ENCODE measurements at regions of chr18 and their contacts with region 1.

Region 1: DNA sequence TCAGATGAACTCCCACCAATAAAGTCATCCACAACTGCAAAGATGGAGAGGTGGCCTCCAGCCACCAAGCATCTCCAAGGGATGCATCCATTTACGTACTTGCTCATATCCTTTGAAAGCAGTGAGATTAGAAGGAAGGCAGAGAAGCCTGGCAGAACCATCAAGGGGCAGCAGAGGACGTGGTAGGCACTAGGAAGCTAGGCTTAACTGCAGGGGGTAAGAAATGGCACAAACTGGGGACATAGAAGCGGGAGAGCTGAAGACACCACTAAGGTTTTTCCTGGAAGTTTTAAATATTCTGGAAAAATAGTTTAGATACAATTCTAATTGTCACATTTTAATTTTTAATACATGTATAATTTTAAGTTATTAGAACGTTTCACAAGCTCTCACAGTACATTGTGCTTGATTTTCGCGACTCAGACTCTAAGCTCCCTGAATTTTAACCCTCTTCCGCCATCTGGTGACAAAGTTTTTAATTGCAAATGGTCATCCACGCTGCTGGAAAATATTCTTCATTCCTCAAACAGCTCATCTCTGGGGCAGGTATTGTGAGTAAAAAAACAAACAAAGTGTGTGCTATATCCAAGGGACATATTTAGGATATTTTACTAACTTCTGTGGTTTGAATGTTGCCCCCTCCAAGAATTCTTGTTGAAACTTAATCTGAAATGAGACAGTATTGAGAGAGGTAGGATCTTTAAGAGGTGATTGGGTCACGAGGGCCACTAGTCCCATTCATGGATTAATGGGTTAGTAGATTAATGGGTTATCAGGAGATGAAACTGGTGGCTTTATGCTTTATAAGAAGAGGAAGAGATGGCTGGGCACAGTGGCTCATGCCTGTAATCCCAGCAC is 1.6 kb upstream of the PSTPIP2 start:
- DNase-seq: peak; percentile 30 to 70 (median 38)
- ATAC-seq: peak; percentile 58
- H3K4me3 ChIP-seq: no peak overlapping the region
- H3K27ac ChIP-seq: no peak overlapping the region
- H3K4me1 ChIP-seq: peaks cover 3 to 31% of the 10 kb centered on the region in 2 experiments; a peak in 4 of 5 replicates
- H3K27me3 ChIP-seq: no peaks in the 10 kb centered on the region
- CTCF ChIP-seq: peak; percentile 53 to 68 (median 58); a peak in 4 of 6 replicates
- EP300 ChIP-seq: no peak
- POLR2A ChIP-seq: no peak
- RAD21 ChIP-seq: peak; percentile 79 to 85

Region 2: DNA sequence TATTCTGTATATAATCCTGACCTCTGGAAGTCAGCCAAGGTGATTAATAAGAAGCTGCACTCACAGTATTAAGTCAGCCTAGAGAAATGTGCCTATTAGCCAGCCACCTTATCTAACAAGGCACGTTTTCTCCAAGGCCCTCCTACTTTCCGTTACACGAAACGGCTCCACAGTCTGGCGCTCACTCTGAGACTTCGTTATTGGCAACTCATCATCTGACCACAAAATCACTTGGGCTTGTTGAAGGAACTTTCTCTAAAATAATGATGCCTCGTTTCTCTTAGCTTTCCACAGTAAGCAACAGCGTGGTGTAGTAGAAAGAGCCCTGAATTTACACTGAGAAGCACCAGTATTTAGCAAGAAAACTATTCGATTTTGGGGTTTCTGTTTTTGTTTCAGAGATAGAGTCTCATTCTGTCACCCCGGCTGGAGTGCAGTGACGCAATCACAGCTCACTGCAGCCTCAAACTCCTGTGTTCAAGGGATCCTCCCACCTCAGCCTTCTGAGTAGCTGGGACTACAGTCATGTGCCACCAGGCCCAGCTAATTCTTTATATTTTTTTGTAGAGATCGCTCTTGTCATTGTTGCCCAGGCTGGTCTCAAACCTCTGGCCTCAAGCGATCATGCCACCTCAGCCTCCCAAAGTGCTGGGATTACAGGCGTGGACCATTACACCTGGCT is 403.3 kb before region 1 on chr18:
- CTCF ChIA-PET with region 1: interaction called, 4 read pairs
- POLR2A ChIA-PET with region 1: no interaction called
- in situ Hi-C with region 1: loop called (anchors 10 kb)
- intact Hi-C with region 1: loop called (anchors 2 kb)
- DNase-seq: peak; percentile 71 to 81 (median 72)
- ATAC-seq: peak; percentile 93
- H3K4me3 ChIP-seq: no peak overlapping the region
- H3K27ac ChIP-seq: peak overlapping the region; percentile 85
- H3K4me1 ChIP-seq: peaks cover 12 to 19% of the 10 kb centered on the region in 2 experiments
- H3K27me3 ChIP-seq: no peaks in the 10 kb centered on the region
- CTCF ChIP-seq: no peak
- EP300 ChIP-seq: peak; percentile 88
- POLR2A ChIP-seq: no peak
- RAD21 ChIP-seq: no peak

Region 3: DNA sequence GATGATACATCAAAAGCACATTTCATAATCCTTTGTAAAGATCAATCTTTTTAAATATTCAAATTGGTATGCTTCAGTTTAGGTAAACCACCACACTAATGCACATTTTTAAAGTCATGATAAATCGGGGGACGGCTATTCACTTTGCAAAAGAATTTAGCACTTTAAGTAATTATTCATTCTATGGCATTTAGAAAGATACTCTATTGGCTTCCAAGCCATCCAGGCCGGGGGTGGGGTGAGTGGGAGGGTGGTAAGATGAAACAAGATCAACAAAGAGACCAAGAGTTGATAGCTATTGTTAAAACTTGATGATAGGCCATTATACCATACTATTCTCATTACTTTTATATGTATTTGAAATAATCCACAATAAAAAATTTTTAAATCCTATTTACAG is 147.6 kb before region 1 on chr18:
- CTCF ChIA-PET with region 1: interaction called, 13 read pairs
- POLR2A ChIA-PET with region 1: no interaction called
- in situ Hi-C with region 1: no loop called
- intact Hi-C with region 1: no loop called
- DNase-seq: no peak
- ATAC-seq: no peak
- H3K4me3 ChIP-seq: no peak overlapping the region
- H3K27ac ChIP-seq: no peak overlapping the region
- H3K4me1 ChIP-seq: no peaks in the 10 kb centered on the region
- H3K27me3 ChIP-seq: no peaks in the 10 kb centered on the region
- CTCF ChIP-seq: no peak
- EP300 ChIP-seq: no peak
- POLR2A ChIP-seq: no peak
- RAD21 ChIP-seq: no peak

Region 4: DNA sequence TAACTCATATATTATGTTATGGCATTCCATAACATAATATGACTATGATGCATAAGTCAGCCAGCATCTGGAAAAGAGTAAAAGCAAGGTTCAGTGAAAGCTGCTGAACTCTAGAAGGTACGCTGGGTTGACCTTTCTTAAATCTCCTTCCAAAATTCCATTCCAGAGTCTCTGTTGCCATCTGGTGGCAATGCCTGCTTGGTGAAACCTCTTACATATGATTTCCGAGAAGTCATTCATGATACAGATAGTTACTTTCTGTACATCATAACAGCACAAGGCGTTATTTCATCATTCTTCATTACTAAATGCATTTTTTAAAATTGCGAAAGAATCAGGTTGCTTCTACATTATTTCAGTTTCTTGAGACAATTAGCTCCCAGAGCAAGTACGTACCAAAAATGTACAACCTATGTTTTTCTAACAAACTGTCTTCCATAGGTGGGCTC is 99.6 kb before region 1 on chr18:
- CTCF ChIA-PET with region 1: interaction called, 7 read pairs
- POLR2A ChIA-PET with region 1: no interaction called
- in situ Hi-C with region 1: no loop called
- intact Hi-C with region 1: loop called (anchors 1 kb)
- DNase-seq: peak; percentile 13 to 73 (median 29)
- ATAC-seq: peak; percentile 91
- H3K4me3 ChIP-seq: no peak overlapping the region
- H3K27ac ChIP-seq: no peak overlapping the region
- H3K4me1 ChIP-seq: peaks cover 0 to 5% of the 10 kb centered on the region in 2 experiments; a peak in 1 of 5 replicates
- H3K27me3 ChIP-seq: no peaks in the 10 kb centered on the region
- CTCF ChIP-seq: peak; percentile 54 to 89 (median 68); a peak in 5 of 6 replicates
- EP300 ChIP-seq: no peak; the same call in 1 of the 2 replicates
- POLR2A ChIP-seq: no peak
- RAD21 ChIP-seq: peak; percentile 77 to 88

Region 5: GRCh38 chr18:45997700-45998151 is 76.0 kb before region 1 on chr18:
- CTCF ChIA-PET with region 1: no interaction called
- POLR2A ChIA-PET with region 1: no interaction called
- in situ Hi-C with region 1: no loop called
- intact Hi-C with region 1: no loop called
- DNase-seq: no peak
- ATAC-seq: peak; percentile 45; the same call in 2 of the 3 replicates
- H3K4me3 ChIP-seq: no peak overlapping the region
- H3K27ac ChIP-seq: no peak overlapping the region
- H3K4me1 ChIP-seq: peaks cover 4 to 21% of the 10 kb centered on the region in 2 experiments; a peak in 4 of 5 replicates
- H3K27me3 ChIP-seq: no peaks in the 10 kb centered on the region
- CTCF ChIP-seq: no peak
- EP300 ChIP-seq: no peak
- POLR2A ChIP-seq: no peak
- RAD21 ChIP-seq: no peak

Measured in K562 (cell line).